ENCODE measurements at regions of chr14 and their contacts with region 1.

Region 1: GRCh38 chr14:104563742-104564615 is 15.6 kb upstream of the C14orf180 start:
- DNase-seq: no peak
- H3K4me3 ChIP-seq: no peak overlapping the region
- H3K27ac ChIP-seq: no peak overlapping the region
- H3K4me1 ChIP-seq: peaks cover 8 to 13% (median 9%) of the 10 kb centered on the region in 3 donors
- H3K27me3 ChIP-seq: peaks cover 0 to 100% (median 0%) of the 10 kb centered on the region in 4 donors
- CTCF ChIP-seq: peak in 5 of 6 experiments; percentile 70 to 85 (median 74)
- POLR2A ChIP-seq: no peak

Region 2: GRCh38 chr14:104078031-104078455 is 485.9 kb before region 1 on chr14:
- intact Hi-C with region 1: loop called (anchors 10 kb)
- DNase-seq: no peak
- H3K4me3 ChIP-seq: no peak overlapping the region
- H3K27ac ChIP-seq: no peak overlapping the region
- H3K4me1 ChIP-seq: peaks cover 0 to 8% (median 0%) of the 10 kb centered on the region in 3 donors
- H3K27me3 ChIP-seq: peaks cover 0 to 55% (median 0%) of the 10 kb centered on the region in 4 donors
- CTCF ChIP-seq: peak; percentile 97 to 100 (median 99)
- POLR2A ChIP-seq: no peak

Region 3: GRCh38 chr14:104137297-104138097 is 426.5 kb before region 1 on chr14:
- intact Hi-C with region 1: loop called (anchors 5 kb)
- DNase-seq: no peak
- H3K4me3 ChIP-seq: peak overlapping the region; percentile 21 to 67 (median 45)
- H3K27ac ChIP-seq: peak overlapping the region in 2 of 4 donors; percentile 51 to 64
- H3K4me1 ChIP-seq: peaks cover 18 to 56% (median 31%) of the 10 kb centered on the region in 3 donors
- H3K27me3 ChIP-seq: peaks cover 13 to 87% (median 23%) of the 10 kb centered on the region in 4 donors
- CTCF ChIP-seq: peak; percentile 85 to 95 (median 90)
- POLR2A ChIP-seq: no peak

Region 4: DNA sequence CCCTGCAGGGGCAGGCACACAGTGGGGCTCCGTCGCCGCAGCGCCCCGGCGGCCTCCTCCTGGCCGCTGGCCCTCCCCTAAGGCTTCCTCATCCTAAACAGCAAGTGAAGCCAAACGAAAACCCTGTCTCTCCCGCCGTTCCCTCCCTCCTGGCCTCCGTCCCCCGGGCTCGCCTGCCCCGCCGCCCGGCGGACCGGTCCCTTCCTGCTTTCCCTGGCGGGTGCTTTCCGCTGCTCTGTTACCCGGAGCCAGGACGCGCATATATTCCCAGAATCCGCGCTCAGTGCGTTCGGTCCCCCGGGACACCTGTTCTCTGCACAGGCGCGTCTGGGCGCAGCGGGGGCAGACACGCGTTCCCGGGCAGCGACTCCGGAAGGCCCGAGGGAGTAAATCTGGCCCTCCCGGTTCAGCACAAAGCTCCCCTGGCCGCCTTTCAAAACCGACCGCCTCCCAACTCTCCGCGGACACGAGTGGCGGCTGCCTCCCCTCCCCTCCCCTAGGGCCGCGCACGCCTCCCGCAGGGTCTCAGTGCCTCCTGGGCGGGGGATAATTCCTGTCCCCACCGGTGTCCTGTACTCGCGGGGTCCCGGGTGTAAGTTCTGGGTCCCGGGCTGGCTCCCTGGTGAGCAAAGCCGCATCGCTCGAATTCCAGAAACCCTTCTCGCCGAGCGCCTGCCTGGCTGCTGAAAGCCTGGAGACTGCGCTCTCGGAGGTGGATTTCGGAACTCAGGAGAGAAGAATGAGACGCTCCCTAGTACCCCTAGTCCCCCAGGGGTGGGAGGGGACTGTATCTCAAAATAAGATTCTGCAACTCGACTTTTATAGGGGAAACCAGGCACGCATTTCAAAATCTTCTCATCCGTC is 279.7 kb after region 1 on chr14:
- intact Hi-C with region 1: no loop called
- DNase-seq: no peak
- H3K4me3 ChIP-seq: peak overlapping the region; percentile 21 to 60 (median 41)
- H3K27ac ChIP-seq: no peak overlapping the region
- H3K4me1 ChIP-seq: peaks cover 5 to 22% (median 17%) of the 10 kb centered on the region in 3 donors
- H3K27me3 ChIP-seq: peaks cover 0 to 68% (median 6%) of the 10 kb centered on the region in 4 donors
- CTCF ChIP-seq: no peak
- POLR2A ChIP-seq: no peak

Measured in esophagus squamous epithelium (tissue), 5 donors.